Heart left ventricle (tissue), 16 donors: ENCODE measurements at regions of chr3 and their contacts with region 1.

Region 1: DNA sequence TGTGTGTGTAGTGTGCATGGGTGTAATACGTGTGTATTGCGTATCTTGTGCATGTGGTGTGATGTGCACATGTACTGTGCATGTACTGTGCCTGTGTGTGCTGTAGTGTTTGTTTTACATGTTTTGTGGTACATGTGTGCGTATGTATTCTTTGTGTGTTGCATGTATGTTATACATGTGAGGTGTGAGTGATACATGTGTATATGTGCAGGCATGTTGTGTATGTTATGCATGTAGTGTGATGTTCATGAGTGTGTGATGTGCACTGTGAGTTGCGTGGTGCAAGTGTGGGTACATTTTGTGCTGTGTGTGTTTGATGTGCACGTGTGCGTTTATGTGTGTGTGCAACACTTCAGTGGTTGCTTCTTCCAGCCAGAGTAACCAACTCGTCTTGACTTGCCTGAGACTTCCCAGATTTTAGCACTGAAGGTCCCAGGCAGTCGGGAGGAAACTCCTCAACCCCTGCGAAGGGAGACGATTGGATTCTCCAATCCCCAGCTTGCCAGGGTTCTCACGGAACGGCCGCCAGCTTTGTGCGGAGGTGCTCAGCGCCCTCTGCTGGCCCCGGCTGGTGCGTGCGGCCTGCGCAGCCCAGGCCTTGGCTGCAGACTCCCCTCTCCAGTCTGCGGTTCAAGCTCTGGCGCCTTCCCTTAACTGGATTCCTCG is 3.6 kb downstream of the GALNT15 start:
- DNase-seq: peak; percentile 78 to 92 (median 84)
- ATAC-seq: peak; percentile 45 to 78 (median 76)
- H3K4me3 ChIP-seq: peak overlapping the region in 10 of 12 donors; percentile 3 to 56 (median 35)
- H3K27ac ChIP-seq: peak overlapping the region in 2 of 12 donors; percentile 46 to 50
- H3K4me1 ChIP-seq: peaks cover 0 to 49% (median 29%) of the 10 kb centered on the region in 12 donors
- H3K27me3 ChIP-seq: no peaks in the 10 kb centered on the region
- CTCF ChIP-seq: peak; percentile 94 to 99 (median 96)
- POLR2A ChIP-seq: peak in 1 of 2 donors; percentile 50

Region 2: DNA sequence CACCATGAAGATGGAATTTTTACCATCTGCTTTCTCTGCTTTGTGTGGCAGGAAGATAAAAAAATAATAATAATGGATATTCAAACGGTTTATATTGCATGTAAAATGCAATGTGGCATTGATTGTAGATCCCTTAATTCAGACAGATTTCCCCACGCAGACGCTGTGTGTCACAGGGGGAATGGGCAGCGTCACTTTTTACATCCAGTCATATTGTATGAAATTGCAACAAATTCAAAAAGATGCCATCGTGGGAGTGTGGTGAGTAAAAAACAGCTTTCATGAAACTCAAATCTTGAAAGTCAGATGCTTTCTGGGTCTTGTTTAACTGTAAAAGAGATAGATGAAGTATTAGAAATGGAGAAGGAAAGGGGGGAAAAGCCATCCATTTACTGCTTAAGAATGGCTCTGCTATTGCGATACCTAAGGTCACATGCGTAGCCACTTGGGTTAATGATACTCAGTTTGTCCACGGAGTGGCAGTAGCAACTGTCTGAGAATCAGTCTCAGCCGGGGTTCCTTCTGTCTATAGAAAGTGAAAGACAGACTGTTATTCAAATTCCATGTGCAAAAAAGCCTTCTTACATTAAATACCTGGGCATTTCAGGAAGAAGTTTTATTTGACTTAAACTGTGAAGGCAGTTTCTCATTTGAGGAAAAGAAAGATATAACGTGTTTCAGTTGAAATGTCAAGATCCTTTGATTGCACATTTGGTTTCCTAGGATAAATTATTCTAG is 548.1 kb before region 1 on chr3:
- intact Hi-C with region 1: loop called in 1 of 10 experiments (anchors 10 kb)
- DNase-seq: peak in 4 of 5 donors; percentile 40 to 61 (median 52)
- ATAC-seq: peak; percentile 73 to 95 (median 92)
- H3K4me3 ChIP-seq: peak overlapping the region in 9 of 12 donors; percentile 10 to 46 (median 30)
- H3K27ac ChIP-seq: peak overlapping the region in 7 of 12 donors; percentile 35 to 65 (median 48)
- H3K4me1 ChIP-seq: peaks cover 0 to 31% (median 20%) of the 10 kb centered on the region in 12 donors
- H3K27me3 ChIP-seq: no peaks in the 10 kb centered on the region
- CTCF ChIP-seq: peak; percentile 54 to 87 (median 79)
- POLR2A ChIP-seq: no peak

Region 3: GRCh38 chr3:15815696-15816095 is 362.4 kb before region 1 on chr3:
- intact Hi-C with region 1: loop called (anchors 2 to 5 kb)
- DNase-seq: no peak
- ATAC-seq: peak in 2 of 4 donors; percentile 57 to 59
- H3K4me3 ChIP-seq: no peak overlapping the region
- H3K27ac ChIP-seq: no peak overlapping the region
- H3K4me1 ChIP-seq: peaks cover 0 to 16% (median 4%) of the 10 kb centered on the region in 12 donors
- H3K27me3 ChIP-seq: no peaks in the 10 kb centered on the region
- CTCF ChIP-seq: peak; percentile 25 to 70 (median 52)
- POLR2A ChIP-seq: no peak

Region 4: DNA sequence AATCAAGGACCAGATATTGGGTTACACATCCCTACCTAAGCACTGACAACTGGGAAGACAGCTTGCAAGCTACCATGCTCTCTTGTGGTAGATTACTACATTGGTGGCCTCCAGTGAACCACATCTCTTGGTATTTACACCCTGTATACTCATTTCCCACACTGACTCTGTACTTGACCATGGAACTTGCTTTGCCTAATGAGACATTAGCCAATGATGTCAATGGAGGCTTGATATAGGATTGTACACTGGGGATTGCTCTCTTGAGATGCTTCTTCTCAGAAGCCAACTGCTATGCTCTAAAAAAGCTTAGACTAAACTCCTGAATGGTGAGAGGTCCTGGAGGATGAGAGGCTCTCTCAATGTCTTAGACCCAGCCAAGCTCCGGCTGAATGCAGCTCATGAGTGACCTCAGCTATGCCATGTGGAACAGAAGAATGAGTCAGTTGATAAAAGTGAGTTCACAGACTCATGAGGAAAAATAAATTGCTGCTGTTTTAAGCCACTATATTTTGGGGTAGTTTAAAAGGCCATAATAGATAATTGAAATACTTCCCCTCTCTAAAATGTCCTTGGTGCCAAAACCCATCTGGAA is 65.1 kb before region 1 on chr3:
- intact Hi-C with region 1: loop called in 1 of 10 experiments (anchors 10 kb)
- DNase-seq: no peak
- ATAC-seq: peak in 2 of 4 donors; percentile 65 to 80
- H3K4me3 ChIP-seq: no peak overlapping the region
- H3K27ac ChIP-seq: peak overlapping the region in 8 of 12 donors; percentile 2 to 61 (median 21)
- H3K4me1 ChIP-seq: peaks cover 0 to 13% (median 4%) of the 10 kb centered on the region in 12 donors
- H3K27me3 ChIP-seq: no peaks in the 10 kb centered on the region
- CTCF ChIP-seq: no peak
- POLR2A ChIP-seq: no peak

Region 5: GRCh38 chr3:16130066-16130465 is 48.0 kb before region 1 on chr3:
- intact Hi-C with region 1: loop called in 1 of 10 experiments (anchors 5 kb)
- DNase-seq: no peak
- ATAC-seq: peak; percentile 31 to 52 (median 36)
- H3K4me3 ChIP-seq: no peak overlapping the region
- H3K27ac ChIP-seq: peak overlapping the region in 8 of 12 donors; percentile 2 to 52 (median 32)
- H3K4me1 ChIP-seq: peaks cover 0 to 44% (median 26%) of the 10 kb centered on the region in 12 donors
- H3K27me3 ChIP-seq: no peaks in the 10 kb centered on the region
- CTCF ChIP-seq: no peak
- POLR2A ChIP-seq: no peak

Region 6: DNA sequence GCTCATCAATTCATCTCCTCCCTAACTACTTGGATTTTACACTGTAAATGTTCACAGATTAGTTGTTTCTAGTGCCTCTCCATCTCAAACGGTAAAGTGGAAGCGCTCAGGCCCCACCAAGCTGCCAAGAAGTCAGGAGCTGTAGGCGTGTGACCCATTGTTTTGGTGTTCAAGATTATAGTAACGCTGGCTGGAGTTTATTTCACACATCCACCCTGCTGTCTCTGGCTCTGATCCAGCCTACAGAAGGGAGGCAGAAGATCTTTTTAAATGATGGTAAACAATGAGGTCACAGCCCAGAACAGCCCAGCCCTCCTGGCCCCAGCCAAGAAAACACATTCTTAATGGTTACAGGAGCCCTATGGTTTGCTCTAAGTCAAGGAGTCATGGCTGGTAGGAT is 29.3 kb before region 1 on chr3:
- intact Hi-C with region 1: loop called in 1 of 10 experiments (anchors 2 kb)
- DNase-seq: peak; percentile 71 to 83 (median 80)
- ATAC-seq: peak; percentile 78 to 95 (median 84)
- H3K4me3 ChIP-seq: no peak overlapping the region
- H3K27ac ChIP-seq: peak overlapping the region in 11 of 12 donors; percentile 9 to 80 (median 52)
- H3K4me1 ChIP-seq: peaks cover 3 to 32% (median 24%) of the 10 kb centered on the region in 12 donors
- H3K27me3 ChIP-seq: no peaks in the 10 kb centered on the region
- CTCF ChIP-seq: no peak
- POLR2A ChIP-seq: no peak

Region 7: GRCh38 chr3:16247276-16248061 is 69.4 kb after region 1 on chr3:
- intact Hi-C with region 1: loop called in 8 of 10 experiments (anchors 1 to 5 kb)
- DNase-seq: peak; percentile 75 to 86 (median 79)
- ATAC-seq: peak; percentile 40 to 68 (median 65)
- H3K4me3 ChIP-seq: no peak overlapping the region
- H3K27ac ChIP-seq: no peak overlapping the region
- H3K4me1 ChIP-seq: peaks cover 0 to 28% (median 13%) of the 10 kb centered on the region in 12 donors
- H3K27me3 ChIP-seq: no peaks in the 10 kb centered on the region
- CTCF ChIP-seq: peak; percentile 85 to 98 (median 94)
- POLR2A ChIP-seq: no peak